Adrenal gland (tissue), 19 donors: ENCODE measurements at regions of chr1 and their contacts with region 1.

Region 1: DNA sequence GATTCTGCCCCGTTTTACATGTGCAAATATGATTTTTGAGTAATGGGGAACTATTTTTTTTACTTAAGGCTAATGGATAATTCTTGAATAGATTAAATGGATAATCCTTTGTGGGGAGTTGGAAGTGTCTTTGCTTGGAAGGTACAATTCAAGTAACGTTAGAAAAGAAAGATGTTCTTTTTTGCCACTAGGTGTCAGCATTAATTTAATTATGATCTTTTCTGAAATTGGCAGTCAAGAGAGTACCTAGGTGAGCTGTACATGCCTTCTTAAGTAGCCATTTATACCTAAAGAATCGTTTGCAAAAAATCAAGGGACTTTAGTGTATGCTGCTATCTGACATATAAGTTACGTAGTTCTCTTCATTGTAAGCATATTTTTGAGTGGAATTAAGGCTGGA is 2.2 kb downstream of the FBXO28 start:
- DNase-seq: no peak
- H3K4me3 ChIP-seq: no peak overlapping the region
- H3K27ac ChIP-seq: no peak overlapping the region
- H3K4me1 ChIP-seq: peaks cover 12 to 27% of the 10 kb centered on the region in 2 donors
- H3K27me3 ChIP-seq: no peaks in the 10 kb centered on the region
- CTCF ChIP-seq: peak; percentile 35 to 62 (median 54)
- POLR2A ChIP-seq: no peak

Region 2: DNA sequence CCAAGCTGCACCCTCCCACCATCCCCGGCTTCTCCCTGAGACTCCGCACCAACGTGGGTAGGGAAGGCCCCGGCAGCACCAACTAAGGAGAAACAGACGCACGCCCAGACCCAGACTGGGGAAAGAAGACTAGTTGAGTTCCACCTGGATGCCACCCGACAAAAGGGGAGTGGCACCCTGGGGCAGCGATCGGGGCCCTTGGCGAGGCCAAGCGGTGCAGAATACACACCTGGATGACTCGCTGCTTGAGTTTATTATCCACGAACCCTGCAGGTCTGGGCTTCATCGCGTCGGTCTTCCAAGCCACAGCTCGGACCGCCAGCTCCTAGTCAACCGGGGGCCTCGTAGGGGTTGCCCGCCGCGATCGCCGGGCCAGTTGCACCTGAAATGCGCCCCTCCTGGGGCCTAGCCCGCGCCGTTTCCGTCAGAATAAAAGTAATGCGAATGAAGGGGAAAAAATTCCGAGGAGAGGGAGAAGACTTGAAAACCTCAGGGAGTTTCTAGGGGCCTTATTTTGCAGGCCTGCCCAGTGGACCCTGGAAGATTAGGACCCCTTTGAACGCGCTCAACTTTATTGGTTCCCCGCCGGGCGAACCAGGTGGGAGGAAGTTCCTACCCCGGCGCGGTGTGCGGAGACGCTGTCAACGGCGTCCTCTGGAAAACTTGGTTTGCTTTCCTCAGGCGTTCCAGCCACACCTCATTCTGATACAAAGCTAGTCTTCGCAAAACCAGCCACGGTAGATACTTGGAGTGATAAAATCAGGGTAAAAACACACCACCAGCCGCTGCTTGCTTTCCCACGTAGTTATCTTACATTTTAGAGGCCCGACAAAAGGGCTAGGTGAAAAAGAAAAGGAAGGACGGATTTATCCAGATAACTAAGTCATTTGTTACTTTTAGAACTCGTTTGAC is 214.0 kb after region 1 on chr1 and contains the start of gene NVL:
- intact Hi-C with region 1: loop called (anchors 5 kb)
- DNase-seq: peak; percentile 81 to 89 (median 86)
- H3K4me3 ChIP-seq: peak within 1 kb of the TSS; percentile 62 to 86 (median 68)
- H3K27ac ChIP-seq: peak within 1 kb of the TSS; percentile 84 to 94 (median 89)
- H3K4me1 ChIP-seq: peaks cover 19 to 27% of the 10 kb centered on the region in 2 donors
- H3K27me3 ChIP-seq: no peaks in the 10 kb centered on the region
- CTCF ChIP-seq: no peak
- POLR2A ChIP-seq: peak; percentile 42 to 63
- total RNA-seq, gene NVL: 12.0 to 29.7 (median 20.1) TPM